A673 (cell line): ENCODE measurements at regions of chr19 and their contacts with region 1.

Region 1: GRCh38 chr19:56333505-56333904 is 18.9 kb upstream of the ZSCAN5A start:
- DNase-seq: peak; percentile 73
- H3K4me3 ChIP-seq: no peak overlapping the region
- H3K27ac ChIP-seq: no peak overlapping the region
- H3K4me1 ChIP-seq: no peaks in the 10 kb centered on the region
- H3K27me3 ChIP-seq: no peaks in the 10 kb centered on the region
- CTCF ChIP-seq: peak; percentile 80

Region 2: DNA sequence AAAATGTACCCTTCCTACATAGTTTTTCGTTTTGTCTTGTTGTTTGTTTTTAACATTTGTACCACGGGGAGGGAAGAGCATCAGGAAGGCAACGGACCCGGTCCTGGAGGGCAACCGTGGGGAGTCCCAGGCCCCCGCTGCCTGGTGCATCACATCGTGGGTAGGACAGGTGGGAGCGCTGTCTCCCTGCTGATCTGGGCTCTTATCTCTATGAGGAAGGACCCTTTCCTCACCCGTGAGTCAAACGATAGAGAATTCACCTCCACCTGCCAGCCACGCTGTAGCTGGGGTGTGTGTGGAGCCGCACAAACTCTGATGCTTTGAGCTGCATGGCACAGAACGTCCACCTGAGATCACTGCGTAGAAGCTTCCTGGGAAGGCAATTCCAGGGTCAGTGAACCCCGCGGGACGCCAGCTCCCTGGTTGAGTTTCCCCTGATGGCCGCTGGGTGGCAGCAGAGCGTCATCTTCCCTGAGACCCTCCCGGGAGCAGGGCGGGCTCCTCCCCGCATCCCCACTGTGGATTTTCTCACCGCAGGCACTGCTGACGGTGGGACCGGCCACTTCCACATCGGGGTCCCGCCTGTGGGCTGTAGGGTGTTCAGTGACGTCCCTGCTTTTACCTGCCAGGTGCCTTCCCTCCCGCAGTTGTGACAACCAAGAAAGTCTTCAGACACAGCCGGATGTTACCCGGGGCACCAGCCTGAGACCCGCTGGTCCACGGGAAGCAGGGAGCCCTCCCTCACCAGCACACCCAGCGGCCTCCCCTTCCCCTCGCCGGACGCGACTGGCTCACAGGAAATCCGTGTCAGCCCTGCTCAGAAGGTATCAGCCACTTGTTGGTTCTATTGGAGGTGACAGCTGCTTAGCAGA is 267.1 kb before region 1 on chr19:
- CTCF ChIA-PET with region 1: interaction called, 31 read pairs
- POLR2A ChIA-PET with region 1: no interaction called
- intact Hi-C with region 1: loop called (anchors 2 kb)
- DNase-seq: peak; percentile 71
- H3K4me3 ChIP-seq: no peak overlapping the region
- H3K27ac ChIP-seq: no peak overlapping the region
- H3K4me1 ChIP-seq: no peaks in the 10 kb centered on the region
- H3K27me3 ChIP-seq: peaks cover 17% of the 10 kb centered on the region
- CTCF ChIP-seq: peak; percentile 91

Region 3: DNA sequence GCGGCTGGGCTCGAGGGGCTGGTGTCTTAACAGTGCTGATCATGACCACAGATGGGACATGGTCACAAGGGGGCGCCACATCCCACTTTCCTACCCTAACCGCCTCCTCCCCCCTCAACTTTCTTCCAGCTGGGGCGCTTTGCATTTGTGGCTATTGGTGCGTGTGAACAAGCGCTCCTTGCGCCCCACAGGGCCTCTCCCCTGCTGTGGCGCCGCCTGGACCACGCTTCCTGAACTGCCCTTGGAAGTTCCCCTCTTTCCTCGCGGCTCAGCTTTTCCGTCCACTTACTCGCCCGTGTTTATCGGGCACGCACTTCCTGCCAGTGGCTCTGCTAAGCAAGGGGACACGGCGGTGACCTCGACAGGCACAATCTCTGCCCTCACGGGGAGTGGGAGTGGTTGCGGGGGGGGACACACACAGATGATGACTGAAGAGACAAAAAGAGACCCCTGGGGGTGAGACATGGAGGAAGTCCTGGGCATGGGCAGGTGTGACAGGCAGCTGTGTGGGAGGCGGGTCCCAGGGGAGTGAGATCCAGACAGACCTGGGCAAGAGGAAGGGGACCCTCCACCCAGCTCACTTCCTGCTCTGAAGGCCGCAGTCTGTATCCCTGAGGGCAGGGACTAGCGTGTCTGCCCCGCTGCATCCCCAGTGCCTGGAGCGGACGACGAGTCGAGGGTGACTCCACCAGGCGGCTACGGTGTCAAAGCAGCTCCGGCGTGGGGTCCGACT is 252.7 kb before region 1 on chr19:
- CTCF ChIA-PET with region 1: interaction called, 29 read pairs
- POLR2A ChIA-PET with region 1: no interaction called
- intact Hi-C with region 1: loop called (anchors 2 kb)
- DNase-seq: peak; percentile 85
- H3K4me3 ChIP-seq: peak overlapping the region; percentile 43
- H3K27ac ChIP-seq: no peak overlapping the region
- H3K4me1 ChIP-seq: peaks cover 4% of the 10 kb centered on the region
- H3K27me3 ChIP-seq: no peaks in the 10 kb centered on the region
- CTCF ChIP-seq: peak; percentile 67